ENCODE measurements at regions of chr16 and their contacts with region 1.

Region 1: GRCh38 chr16:57071831-57072582 is 20.4 kb upstream of the CPNE2 start:
- DNase-seq: peak; percentile 54 to 69
- H3K4me3 ChIP-seq: no peak overlapping the region
- H3K27ac ChIP-seq: 0 out of 2 replicates have a peak overlapping the region, but pooled peaks have one; percentile 6
- H3K4me1 ChIP-seq: peaks cover 13% of the 10 kb centered on the region
- H3K27me3 ChIP-seq: no peaks in the 10 kb centered on the region
- CTCF ChIP-seq: no peak

Region 2: GRCh38 chr16:57084257-57084770 is 12.3 kb after region 1 on chr16:
- CTCF ChIA-PET with region 1: interaction called, 16 read pairs
- POLR2A ChIA-PET with region 1: no interaction called
- intact Hi-C with region 1: no loop called
- DNase-seq: peak; percentile 47 to 59
- H3K4me3 ChIP-seq: no peak overlapping the region
- H3K27ac ChIP-seq: no peak overlapping the region
- H3K4me1 ChIP-seq: no peaks in the 10 kb centered on the region
- H3K27me3 ChIP-seq: no peaks in the 10 kb centered on the region
- CTCF ChIP-seq: peak; percentile 98